CD4-positive, alpha-beta memory T cell (primary cell): ENCODE measurements at regions of chr11 and their contacts with region 1.

Region 1: DNA sequence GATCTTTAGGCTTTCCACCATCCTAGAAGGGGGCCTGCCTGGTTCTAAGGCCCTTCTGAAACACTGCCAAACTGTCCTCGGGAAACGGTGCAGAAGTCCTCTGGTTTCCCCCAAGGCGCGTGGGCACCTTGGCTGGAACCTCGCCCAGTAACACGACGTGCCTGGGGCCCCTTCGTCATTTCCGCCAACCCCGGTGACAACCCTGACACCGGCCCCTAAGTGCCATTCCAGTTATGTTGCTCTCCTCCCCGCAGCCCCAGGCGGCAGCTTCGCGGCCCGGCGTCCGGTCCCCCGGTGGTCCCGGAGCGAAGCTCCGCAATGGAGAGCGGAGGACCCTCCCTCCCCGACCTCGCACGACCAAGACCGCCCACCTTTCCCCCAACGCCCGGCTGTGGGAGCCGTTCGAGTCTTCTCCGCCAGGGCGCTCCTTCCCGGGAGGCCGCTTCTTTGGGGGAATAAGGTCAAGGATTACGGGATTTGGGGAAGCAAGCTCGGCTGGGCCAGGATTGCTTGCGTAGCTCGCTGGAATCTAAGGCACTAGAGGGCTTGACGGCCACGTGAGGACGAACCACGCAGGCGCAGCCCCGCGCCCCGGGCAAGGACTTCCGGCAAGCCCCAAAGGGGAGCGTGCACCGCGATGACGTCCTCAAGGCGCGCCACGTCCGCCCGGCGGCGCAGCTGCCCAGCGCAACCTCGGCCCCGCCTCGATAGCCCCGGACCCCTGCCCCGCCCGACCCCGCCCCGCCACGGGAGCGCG is 626 bp downstream of the RNH1 start:
- DNase-seq: peak; percentile 94 to 98 (median 97)
- H3K4me3 ChIP-seq: peak overlapping the region; percentile 91 to 99
- H3K4me3 Mint-ChIP-seq: peak overlapping the region; percentile 95 to 100 (median 98)
- H3K27ac ChIP-seq: peak overlapping the region; percentile 100
- H3K27ac Mint-ChIP-seq: peak overlapping the region; percentile 100
- H3K4me1 ChIP-seq: peaks cover 35% of the 10 kb centered on the region
- H3K4me1 Mint-ChIP-seq: peaks cover 6 to 42% (median 25%) of the 10 kb centered on the region in 4 donors
- H3K27me3 ChIP-seq: no peaks in the 10 kb centered on the region
- H3K27me3 Mint-ChIP-seq: no peaks in the 10 kb centered on the region

Region 2: GRCh38 chr11:416757-417621 is 89.4 kb before region 1 on chr11:
- CTCF ChIA-PET with region 1: no interaction called
- POLR2A ChIA-PET with region 1: interaction called, 26 read pairs
- intact Hi-C with region 1: loop called (anchors 2 kb)
- DNase-seq: peak in 4 of 5 donors; percentile 38 to 54 (median 45)
- H3K4me3 ChIP-seq: peak overlapping the region; percentile 17 to 73
- H3K4me3 Mint-ChIP-seq: peak overlapping the region; percentile 26 to 100 (median 96)
- H3K27ac ChIP-seq: peak overlapping the region; percentile 61
- H3K27ac Mint-ChIP-seq: peak overlapping the region in 4 of 7 donors; percentile 70 to 92 (median 83)
- H3K4me1 ChIP-seq: peaks cover 31% of the 10 kb centered on the region
- H3K4me1 Mint-ChIP-seq: peaks cover 4 to 42% (median 17%) of the 10 kb centered on the region in 4 donors
- H3K27me3 ChIP-seq: no peaks in the 10 kb centered on the region
- H3K27me3 Mint-ChIP-seq: no peaks in the 10 kb centered on the region

Region 3: GRCh38 chr11:465896-466530 is 40.4 kb before region 1 on chr11:
- CTCF ChIA-PET with region 1: no interaction called
- POLR2A ChIA-PET with region 1: no interaction called
- intact Hi-C with region 1: no loop called
- DNase-seq: no peak
- H3K4me3 ChIP-seq: no peak overlapping the region
- H3K4me3 Mint-ChIP-seq: no peak overlapping the region
- H3K27ac ChIP-seq: no peak overlapping the region
- H3K27ac Mint-ChIP-seq: peak overlapping the region in 1 of 7 donors; percentile 83
- H3K4me1 ChIP-seq: no peaks in the 10 kb centered on the region
- H3K4me1 Mint-ChIP-seq: peaks cover 0 to 4% (median under 1%) of the 10 kb centered on the region in 4 donors
- H3K27me3 ChIP-seq: no peaks in the 10 kb centered on the region
- H3K27me3 Mint-ChIP-seq: no peaks in the 10 kb centered on the region

Region 4: GRCh38 chr11:518463-519250 is 12.2 kb after region 1 on chr11:
- CTCF ChIA-PET with region 1: interaction called, 23 read pairs
- POLR2A ChIA-PET with region 1: interaction called, 5 read pairs
- intact Hi-C with region 1: loop called (anchors 1 kb)
- DNase-seq: peak; percentile 82 to 91 (median 84)
- H3K4me3 ChIP-seq: peak overlapping the region in 1 of 2 donors; percentile 30
- H3K4me3 Mint-ChIP-seq: peak overlapping the region; percentile 20 to 91 (median 84)
- H3K27ac ChIP-seq: no peak overlapping the region
- H3K27ac Mint-ChIP-seq: peak overlapping the region; percentile 80 to 92 (median 88)
- H3K4me1 ChIP-seq: peaks cover 4% of the 10 kb centered on the region
- H3K4me1 Mint-ChIP-seq: peaks cover 2 to 12% (median 3%) of the 10 kb centered on the region in 4 donors
- H3K27me3 ChIP-seq: no peaks in the 10 kb centered on the region
- H3K27me3 Mint-ChIP-seq: no peaks in the 10 kb centered on the region